Right cardiac atrium (tissue), 5 donors: ENCODE measurements at regions of chr3 and their contacts with region 1.

Region 1: DNA sequence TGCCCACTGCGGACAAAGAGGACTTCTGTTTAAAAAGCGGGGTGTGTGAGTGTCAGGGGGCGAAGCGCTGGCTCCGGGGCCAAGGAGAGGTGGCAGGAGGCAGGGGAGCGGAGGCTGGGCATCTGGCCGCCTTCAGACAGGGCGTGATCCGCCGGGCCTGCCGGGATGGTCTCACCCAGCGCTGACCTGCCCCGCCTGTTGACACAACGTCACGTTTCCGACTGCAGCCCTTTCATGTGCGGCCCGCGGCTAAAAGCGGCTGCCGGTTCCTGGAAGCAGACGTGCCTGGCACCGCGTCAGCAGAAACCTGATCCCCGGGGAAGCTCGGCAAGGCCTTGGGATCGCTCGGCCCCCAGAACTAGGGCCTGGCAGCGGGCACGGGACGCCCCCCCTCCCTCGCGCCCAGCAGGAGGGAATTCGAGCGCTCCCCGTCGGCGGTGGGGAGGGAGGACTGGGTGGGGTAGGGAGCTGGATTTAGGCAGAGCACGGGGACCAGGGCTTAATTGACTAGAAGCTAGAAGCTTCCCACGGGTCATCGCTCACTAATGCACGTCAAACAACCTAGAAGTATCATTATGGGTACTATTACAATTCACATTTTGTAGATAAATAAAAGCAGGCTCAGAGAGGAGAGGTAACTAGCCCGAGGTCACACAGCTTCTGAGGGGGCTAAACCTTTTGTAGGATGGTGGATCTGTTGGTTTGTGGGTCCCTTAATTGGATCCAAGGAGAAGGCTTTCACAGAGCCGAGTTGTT is 7.7 kb downstream of the BHLHE40 start:
- DNase-seq: peak; percentile 98 to 99 (median 98)
- ATAC-seq: peak; percentile 93
- H3K4me3 ChIP-seq: peak overlapping the region; percentile 17
- H3K27ac ChIP-seq: peak overlapping the region; percentile 96
- H3K4me1 ChIP-seq: peaks cover 7% of the 10 kb centered on the region
- H3K27me3 ChIP-seq: no peaks in the 10 kb centered on the region

Region 2: GRCh38 chr3:4741404-4742307 is 245.3 kb before region 1 on chr3:
- intact Hi-C with region 1: loop called in 2 of 4 experiments (anchors 5 to 10 kb)
- DNase-seq: peak; percentile 70 to 79 (median 75)
- ATAC-seq: peak; percentile 89 to 91
- H3K4me3 ChIP-seq: no peak overlapping the region
- H3K27ac ChIP-seq: peak overlapping the region; percentile 74
- H3K4me1 ChIP-seq: peaks cover 29% of the 10 kb centered on the region
- H3K27me3 ChIP-seq: no peaks in the 10 kb centered on the region

Region 3: DNA sequence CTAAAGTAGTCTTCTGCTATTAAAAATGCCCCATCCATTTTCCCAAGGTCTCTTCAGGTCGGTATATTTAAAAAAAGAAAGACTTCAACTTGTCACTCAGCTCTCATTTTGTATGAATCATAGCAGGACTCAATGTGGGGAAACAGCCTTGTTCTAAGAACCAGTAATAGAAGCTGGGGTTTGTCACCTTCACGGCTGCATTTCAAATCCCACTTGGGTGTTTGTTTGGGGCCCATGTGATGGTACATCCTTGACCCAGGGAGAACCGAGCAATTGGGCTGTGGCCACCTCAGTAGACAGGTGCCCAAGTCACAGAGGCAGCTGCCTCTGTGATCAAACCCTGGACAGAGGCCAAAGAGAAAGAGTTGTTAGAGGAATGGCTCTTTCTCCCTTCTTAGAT is 64.8 kb after region 1 on chr3:
- intact Hi-C with region 1: no loop called
- DNase-seq: no peak
- ATAC-seq: no peak
- H3K4me3 ChIP-seq: no peak overlapping the region
- H3K27ac ChIP-seq: no peak overlapping the region
- H3K4me1 ChIP-seq: no peaks in the 10 kb centered on the region
- H3K27me3 ChIP-seq: no peaks in the 10 kb centered on the region